ENCODE measurements at regions of chr20 and their contacts with region 1.

Region 1: GRCh38 chr20:36591854-36592641 is 13.5 kb upstream of the RAB5IF start:
- DNase-seq: peak in 3 of 4 donors; percentile 31 to 40 (median 33)
- ATAC-seq: no peak
- H3K4me3 ChIP-seq: no peak overlapping the region
- H3K27ac ChIP-seq: no peak overlapping the region
- H3K4me1 ChIP-seq: no peaks in the 10 kb centered on the region
- H3K27me3 ChIP-seq: no peaks in the 10 kb centered on the region
- CTCF ChIP-seq: peak in 5 of 7 experiments; percentile 9 to 44 (median 38)
- POLR2A ChIP-seq: no peak

Region 2: GRCh38 chr20:35956616-35957015 is 635.4 kb before region 1 on chr20:
- intact Hi-C with region 1: no loop called
- DNase-seq: no peak
- ATAC-seq: no peak
- H3K4me3 ChIP-seq: no peak overlapping the region
- H3K27ac ChIP-seq: no peak overlapping the region
- H3K4me1 ChIP-seq: peaks cover 29% of the 10 kb centered on the region
- H3K27me3 ChIP-seq: no peaks in the 10 kb centered on the region
- CTCF ChIP-seq: no peak
- POLR2A ChIP-seq: no peak

Region 3: DNA sequence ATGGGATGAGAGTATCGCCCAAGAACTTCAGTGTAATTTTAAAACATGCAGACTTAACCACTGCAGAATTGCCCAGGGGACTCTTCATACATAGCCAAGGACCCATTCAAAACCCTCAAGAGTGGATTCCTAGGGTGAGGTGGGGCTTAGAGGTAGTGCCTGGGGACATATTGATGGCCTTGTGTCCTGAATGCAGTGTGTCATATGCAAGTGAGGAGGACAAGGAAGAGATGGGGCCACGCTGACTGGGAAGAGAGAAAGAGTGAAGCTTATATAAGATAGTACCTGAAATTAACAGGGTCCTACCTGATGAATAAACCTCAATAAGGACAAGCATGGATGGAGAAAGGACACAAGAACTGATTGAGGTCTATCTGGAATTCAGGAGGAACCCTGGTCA is 36.8 kb before region 1 on chr20:
- intact Hi-C with region 1: loop called (anchors 5 kb)
- DNase-seq: no peak
- ATAC-seq: no peak
- H3K4me3 ChIP-seq: no peak overlapping the region
- H3K27ac ChIP-seq: no peak overlapping the region
- H3K4me1 ChIP-seq: peaks cover 7% of the 10 kb centered on the region
- H3K27me3 ChIP-seq: no peaks in the 10 kb centered on the region
- CTCF ChIP-seq: no peak
- POLR2A ChIP-seq: no peak

Region 4: GRCh38 chr20:36745927-36746659 is 154.0 kb after region 1 on chr20 and contains the start of gene NDRG3:
- intact Hi-C with region 1: no loop called
- DNase-seq: peak; percentile 94 to 97 (median 96)
- ATAC-seq: peak; percentile 99
- H3K4me3 ChIP-seq: peak within 1 kb of the TSS; percentile 53 to 93
- H3K27ac ChIP-seq: peak within 1 kb of the TSS; percentile 23 to 72 (median 64)
- H3K4me1 ChIP-seq: peaks cover 19% of the 10 kb centered on the region
- H3K27me3 ChIP-seq: no peaks in the 10 kb centered on the region
- CTCF ChIP-seq: peak in 3 of 7 experiments; percentile 7 to 39 (median 28)
- POLR2A ChIP-seq: peak in 2 of 3 donors; percentile 22 to 34
- total RNA-seq, gene NDRG3: 9.2 to 11.9 TPM

Region 5: DNA sequence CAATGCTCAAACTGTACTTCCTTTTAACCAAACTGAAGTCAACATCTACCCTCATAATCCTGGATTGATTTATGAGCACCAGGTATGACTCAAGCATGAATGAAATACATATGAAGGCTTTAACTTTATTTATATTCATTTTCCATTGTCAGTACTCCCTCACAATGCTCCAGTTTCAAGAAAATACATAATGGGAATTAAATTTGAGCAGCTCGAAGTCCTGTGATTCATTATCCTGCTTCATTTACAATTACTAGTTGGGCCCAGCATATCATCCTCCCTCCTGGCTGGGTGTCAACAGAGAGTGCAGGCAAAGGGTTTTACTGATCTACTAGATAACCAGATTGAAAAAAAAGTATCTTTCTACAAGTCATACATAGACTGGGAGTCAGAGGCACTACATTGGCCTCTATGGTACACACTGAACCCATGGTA is 349.4 kb after region 1 on chr20:
- intact Hi-C with region 1: no loop called
- DNase-seq: peak in 1 of 4 donors; percentile 12
- ATAC-seq: no peak
- H3K4me3 ChIP-seq: no peak overlapping the region
- H3K27ac ChIP-seq: peak overlapping the region; percentile 51 to 78 (median 62)
- H3K4me1 ChIP-seq: peaks cover 92% of the 10 kb centered on the region
- H3K27me3 ChIP-seq: no peaks in the 10 kb centered on the region
- CTCF ChIP-seq: no peak
- POLR2A ChIP-seq: no peak